PC-9 (cell line): ENCODE measurements at regions of chr1 and their contacts with region 1.

Region 1: GRCh38 chr1:54800899-54801759 is at the start of gene TTC22:
- DNase-seq: peak; percentile 72 to 87
- H3K4me3 ChIP-seq: peak within 1 kb of the TSS; percentile 86
- H3K27ac ChIP-seq: peak within 1 kb of the TSS; percentile 76
- H3K4me1 ChIP-seq: peaks cover 79% of the 10 kb centered on the region
- H3K27me3 ChIP-seq: no peaks in the 10 kb centered on the region
- CTCF ChIP-seq: peak; percentile 72
- total RNA-seq, gene TTC22: 24.1 and 26.3 TPM in 2 replicates

Region 2: DNA sequence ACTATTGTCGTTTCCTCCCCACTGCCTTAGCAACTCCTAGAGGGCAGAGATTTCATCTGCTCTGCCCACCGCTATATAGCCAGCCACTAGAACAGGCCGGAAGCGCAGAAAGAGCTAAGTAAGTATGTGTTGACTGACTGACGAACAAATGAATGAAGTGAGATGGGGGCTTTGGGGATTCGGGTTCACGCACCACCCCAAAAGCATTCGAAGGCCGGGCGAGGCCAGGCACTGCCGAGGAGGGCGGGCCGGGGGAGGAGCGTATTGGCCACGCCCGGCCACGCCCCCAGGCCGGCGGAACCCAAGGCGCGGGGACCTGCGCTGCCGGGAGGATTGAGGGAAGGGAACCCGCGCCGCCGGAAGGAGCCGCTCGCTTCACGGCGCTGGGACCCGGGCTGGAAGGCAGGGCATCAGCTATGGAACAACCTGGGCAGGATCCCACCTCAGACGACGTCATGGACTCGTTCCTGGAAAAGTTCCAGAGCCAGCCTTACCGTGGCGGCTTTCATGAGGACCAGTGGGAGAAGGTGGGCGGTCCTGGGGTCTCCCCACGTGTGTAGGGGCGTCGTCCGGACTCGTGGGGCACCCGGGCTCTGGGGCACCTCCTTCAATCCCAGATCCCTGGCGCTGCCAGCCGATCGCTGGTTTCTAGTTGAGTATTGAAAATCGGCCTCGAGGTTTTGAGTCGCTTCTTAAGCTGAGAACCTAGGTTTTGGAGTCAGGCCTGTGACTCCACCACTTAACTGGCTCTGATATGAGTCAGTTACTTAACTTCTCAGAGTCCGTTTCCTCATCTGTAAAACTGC is 85.4 kb before region 1 on chr1 and contains the start of gene TTC4:
- CTCF ChIA-PET with region 1: no interaction called
- POLR2A ChIA-PET with region 1: interaction called, 13 read pairs
- intact Hi-C with region 1: loop called (anchors 5 kb)
- DNase-seq: peak; percentile 66 to 86
- H3K4me3 ChIP-seq: peak within 1 kb of the TSS; percentile 82
- H3K27ac ChIP-seq: peak within 1 kb of the TSS; percentile 78
- H3K4me1 ChIP-seq: peaks cover 9% of the 10 kb centered on the region
- H3K27me3 ChIP-seq: peaks cover 5% of the 10 kb centered on the region
- CTCF ChIP-seq: no peak; the same call in 1 of the 2 replicates
- total RNA-seq, gene TTC4: 30.4 and 31.5 TPM in 2 replicates

Region 3: GRCh38 chr1:54764133-54764921 is 36.8 kb before region 1 on chr1 and contains the start of gene PARS2:
- CTCF ChIA-PET with region 1: interaction called, 3 read pairs
- POLR2A ChIA-PET with region 1: interaction called, 4 read pairs
- intact Hi-C with region 1: loop called (anchors 2 kb)
- DNase-seq: peak; percentile 96 to 99
- H3K4me3 ChIP-seq: peak within 1 kb of the TSS; percentile 82
- H3K27ac ChIP-seq: peak within 1 kb of the TSS; percentile 67
- H3K4me1 ChIP-seq: peaks cover 7% of the 10 kb centered on the region; the same call in 1 of the 2 replicates
- H3K27me3 ChIP-seq: no peaks in the 10 kb centered on the region
- CTCF ChIP-seq: no peak
- total RNA-seq, gene PARS2: 12.9 and 13.4 TPM in 2 replicates